GM10248 (cell line): ENCODE measurements at regions of chr14 and their contacts with region 1.

Region 1: DNA sequence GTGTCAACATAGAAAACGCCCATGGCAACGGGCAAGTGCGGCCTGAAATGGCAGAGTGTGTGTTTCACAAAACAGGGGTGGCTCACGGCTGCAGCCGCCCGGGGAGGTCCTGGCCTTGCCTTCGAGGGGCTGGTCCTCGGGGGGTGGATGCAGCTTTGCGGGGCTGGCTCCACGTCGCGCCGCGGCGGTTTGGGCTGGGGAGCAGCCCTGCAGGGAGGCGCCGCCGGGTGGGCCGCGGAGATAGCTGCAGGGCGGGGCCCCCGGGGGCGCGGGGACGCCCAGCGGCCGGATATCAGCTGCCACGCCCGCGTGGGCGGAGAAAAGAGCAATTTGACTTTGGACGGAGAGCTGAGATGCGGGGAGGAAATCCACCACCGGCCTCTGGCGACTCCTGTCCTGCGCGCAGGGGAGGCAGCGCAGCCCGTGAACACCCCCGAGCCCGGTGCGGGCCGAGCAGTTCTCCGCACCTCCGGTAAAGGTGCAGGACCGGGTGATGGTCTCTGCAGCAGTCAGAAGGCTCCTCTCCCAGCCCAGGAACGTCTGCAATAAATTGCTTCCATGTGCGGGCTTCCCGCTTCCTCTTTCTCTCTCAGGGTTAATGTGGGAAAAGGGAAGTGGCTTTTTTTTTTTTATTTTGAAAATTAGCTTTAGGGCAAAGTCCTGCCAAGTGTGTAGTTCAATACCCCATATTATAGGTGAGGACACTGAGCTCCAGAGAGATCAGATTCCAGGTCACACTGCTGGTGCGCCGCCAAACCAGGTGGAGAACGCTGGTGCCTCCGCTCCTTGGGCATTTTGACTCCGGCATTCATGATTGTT is 110.5 kb downstream of the ARF6 start:
- DNase-seq: peak; percentile 90
- CTCF ChIP-seq: peak; percentile 15

Region 2: GRCh38 chr14:49992901-49993335 is 10.5 kb before region 1 on chr14:
- CTCF ChIA-PET with region 1: interaction called, 16 read pairs
- POLR2A ChIA-PET with region 1: interaction called, 6 read pairs
- DNase-seq: peak; percentile 68
- CTCF ChIP-seq: no peak

Region 3: GRCh38 chr14:50139192-50139591 is 135.8 kb after region 1 on chr14:
- CTCF ChIA-PET with region 1: no interaction called
- POLR2A ChIA-PET with region 1: no interaction called
- DNase-seq: no peak
- CTCF ChIP-seq: no peak